Right ventricle myocardium inferior (tissue), 1 donor: ENCODE measurements at regions of chr7 and their contacts with region 1.

Region 1: DNA sequence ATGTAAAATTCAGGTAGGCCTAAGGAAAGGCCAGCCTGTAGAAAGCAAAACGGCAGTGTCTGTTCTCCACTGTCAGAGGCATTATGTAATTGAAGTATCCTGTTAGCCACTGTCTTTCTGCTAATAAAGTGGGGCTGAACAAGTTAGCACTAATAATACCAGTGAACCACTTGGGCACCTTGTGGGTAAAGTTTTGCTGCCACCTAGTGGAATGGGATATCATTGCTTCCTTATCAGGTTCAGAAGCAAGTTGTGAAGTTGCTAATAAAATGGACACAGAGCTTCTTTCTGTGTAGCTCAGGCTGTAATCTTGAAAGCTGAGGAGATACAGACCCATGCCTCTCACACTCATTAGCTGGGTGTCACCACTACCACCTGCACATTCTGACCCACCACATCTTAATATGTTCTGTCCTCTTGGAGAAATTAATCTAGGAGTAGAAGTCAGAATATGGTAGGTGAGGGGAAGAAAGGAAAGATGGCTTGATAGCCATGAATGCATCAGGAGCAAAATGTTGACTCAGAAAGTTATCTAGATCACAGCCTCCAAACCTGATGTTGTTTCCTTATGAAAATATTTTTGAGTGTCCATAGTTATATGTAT is 175.1 kb downstream of the SEPTIN7 start:
- DNase-seq: no peak
- ATAC-seq: peak; percentile 79

Region 2: DNA sequence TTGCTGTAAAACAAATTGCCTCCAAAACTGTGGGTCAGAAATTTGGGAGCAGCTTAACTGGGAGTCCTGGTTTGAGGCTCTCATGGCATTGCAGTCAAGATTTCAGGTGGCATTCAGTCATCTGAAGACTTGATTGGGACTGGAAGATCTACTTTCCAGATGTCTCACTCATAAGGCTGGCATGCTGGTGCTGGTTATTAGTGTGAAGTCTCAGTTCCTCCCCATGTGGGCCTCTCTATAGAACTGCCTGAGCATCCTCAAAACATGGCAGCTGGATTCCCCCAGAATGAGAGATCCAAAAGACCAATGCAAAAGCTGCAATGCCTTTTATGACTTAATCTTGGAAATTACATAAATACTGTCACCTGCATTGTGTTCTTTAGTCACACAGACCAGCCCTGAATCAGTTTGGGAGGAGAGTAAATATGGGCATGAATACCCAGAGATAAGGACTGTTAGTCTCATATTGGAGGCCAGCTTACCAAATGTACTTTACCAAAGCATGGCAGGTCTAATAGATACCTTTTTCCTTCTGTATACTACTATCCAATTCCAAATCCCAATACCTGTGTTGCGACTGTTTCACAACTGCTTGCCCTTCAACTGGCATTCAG is 274.6 kb before region 1 on chr7:
- intact Hi-C with region 1: loop called (anchors 10 kb)
- DNase-seq: no peak
- ATAC-seq: no peak